ENCODE measurements at regions of chr17 and their contacts with region 1.

Region 1: GRCh38 chr17:74961657-74962490 is 10.7 kb downstream of the HID1 start:
- DNase-seq: peak; percentile 94
- ATAC-seq: peak; percentile 81
- H3K4me3 Mint-ChIP-seq: no peak overlapping the region
- H3K27ac Mint-ChIP-seq: no peak overlapping the region
- H3K4me1 Mint-ChIP-seq: peaks cover 8% of the 10 kb centered on the region
- H3K27me3 Mint-ChIP-seq: peaks cover 16% of the 10 kb centered on the region
- CTCF ChIP-seq: peak; percentile 88

Region 2: GRCh38 chr17:74864866-74865395 is 96.9 kb before region 1 on chr17:
- CTCF ChIA-PET with region 1: interaction called, 40 read pairs
- POLR2A ChIA-PET with region 1: no interaction called
- DNase-seq: peak; percentile 87
- ATAC-seq: peak; percentile 63
- H3K4me3 Mint-ChIP-seq: no peak overlapping the region
- H3K27ac Mint-ChIP-seq: peak overlapping the region; percentile 16
- H3K4me1 Mint-ChIP-seq: peaks cover 14% of the 10 kb centered on the region
- H3K27me3 Mint-ChIP-seq: peaks cover 27% of the 10 kb centered on the region
- CTCF ChIP-seq: peak; percentile 97

Region 3: GRCh38 chr17:74923533-74924249 is 38.2 kb before region 1 on chr17:
- CTCF ChIA-PET with region 1: interaction called, 206 read pairs
- POLR2A ChIA-PET with region 1: no interaction called
- DNase-seq: peak; percentile 79
- ATAC-seq: peak; percentile 18
- H3K4me3 Mint-ChIP-seq: peak overlapping the region; percentile 70
- H3K27ac Mint-ChIP-seq: no peak overlapping the region
- H3K4me1 Mint-ChIP-seq: peaks cover 13% of the 10 kb centered on the region
- H3K27me3 Mint-ChIP-seq: peaks cover 74% of the 10 kb centered on the region
- CTCF ChIP-seq: peak; percentile 91

Region 4: GRCh38 chr17:74981979-74982662 is 20.2 kb after region 1 on chr17:
- CTCF ChIA-PET with region 1: interaction called, 47 read pairs
- POLR2A ChIA-PET with region 1: interaction called, 6 read pairs
- DNase-seq: peak; percentile 86
- ATAC-seq: peak; percentile 94
- H3K4me3 Mint-ChIP-seq: peak overlapping the region; percentile 83
- H3K27ac Mint-ChIP-seq: peak overlapping the region; percentile 92
- H3K4me1 Mint-ChIP-seq: peaks cover 20% of the 10 kb centered on the region
- H3K27me3 Mint-ChIP-seq: peaks cover 33% of the 10 kb centered on the region
- CTCF ChIP-seq: no peak

Region 5: DNA sequence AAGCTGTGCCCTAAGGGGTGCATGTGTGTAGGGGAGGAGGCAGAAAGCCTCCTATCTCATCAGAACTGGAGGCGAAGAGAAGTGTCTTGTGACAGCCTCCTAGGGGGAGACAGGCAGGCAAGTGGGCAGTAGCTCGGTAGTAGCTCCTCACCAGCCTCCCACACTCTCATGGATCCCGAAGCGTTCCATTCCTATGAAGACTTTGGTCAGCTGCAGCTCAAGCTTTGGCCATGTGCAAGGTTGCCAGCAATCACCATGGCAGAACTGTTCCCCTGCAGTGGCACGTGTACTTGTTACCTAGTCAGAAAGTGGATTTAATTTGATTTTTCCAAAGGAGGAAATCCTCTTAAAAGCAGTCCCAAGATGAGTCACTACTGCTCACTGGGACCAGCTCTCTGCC is 57.3 kb after region 1 on chr17:
- CTCF ChIA-PET with region 1: interaction called, 139 read pairs
- POLR2A ChIA-PET with region 1: no interaction called
- DNase-seq: no peak
- ATAC-seq: no peak
- H3K4me3 Mint-ChIP-seq: no peak overlapping the region
- H3K27ac Mint-ChIP-seq: no peak overlapping the region
- H3K4me1 Mint-ChIP-seq: no peaks in the 10 kb centered on the region
- H3K27me3 Mint-ChIP-seq: no peaks in the 10 kb centered on the region
- CTCF ChIP-seq: no peak

Region 6: DNA sequence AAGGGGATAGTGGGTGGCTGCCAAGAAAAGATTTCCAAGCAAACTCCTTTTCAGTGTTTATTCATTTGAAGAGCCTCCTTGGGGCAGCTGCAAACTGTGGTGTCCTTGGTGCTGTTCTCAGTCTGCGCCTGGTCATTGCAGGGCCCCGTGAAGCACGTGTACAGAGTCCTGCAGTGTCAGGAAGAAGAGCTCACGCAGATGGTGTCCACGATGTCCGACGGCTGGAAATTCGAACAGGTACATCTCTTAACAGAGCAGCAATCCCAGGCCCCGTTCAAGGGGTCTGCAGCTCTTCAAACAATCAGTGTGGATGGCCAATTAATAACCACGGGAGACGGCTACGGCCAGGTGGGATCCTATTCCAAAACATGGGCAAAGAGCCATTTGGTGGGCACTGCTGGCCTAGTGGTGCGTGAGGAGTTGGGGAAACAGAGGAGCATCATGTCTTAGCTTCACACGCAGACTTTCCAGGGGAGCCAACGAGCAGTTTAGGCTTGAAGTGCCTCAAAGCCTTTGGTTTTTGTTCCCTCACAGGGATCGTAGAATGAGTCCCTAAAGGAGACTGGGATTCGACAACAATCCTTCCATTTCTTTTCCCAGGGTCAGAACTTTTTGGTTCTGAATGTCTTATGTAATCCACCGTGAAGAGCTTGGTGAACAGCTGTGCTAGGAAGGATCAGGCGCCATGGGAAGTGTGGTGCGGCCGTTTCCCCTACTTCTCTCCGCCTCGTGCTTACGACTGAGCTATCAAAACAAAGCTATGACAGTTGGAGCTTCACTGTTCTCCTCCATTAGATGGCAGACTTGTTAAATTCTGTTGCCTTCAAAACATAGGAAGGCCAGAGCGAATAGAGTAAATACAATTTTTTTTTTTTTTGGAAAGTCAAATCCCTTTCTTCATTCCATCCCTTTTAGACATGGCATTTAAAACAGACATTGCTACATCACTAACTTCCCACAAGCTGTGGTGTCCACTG is 97.8 kb after region 1 on chr17:
- CTCF ChIA-PET with region 1: interaction called, 18 read pairs
- POLR2A ChIA-PET with region 1: no interaction called
- DNase-seq: no peak
- ATAC-seq: peak; percentile 55
- H3K4me3 Mint-ChIP-seq: no peak overlapping the region
- H3K27ac Mint-ChIP-seq: peak overlapping the region; percentile 15; the same call in 1 of the 2 replicates
- H3K4me1 Mint-ChIP-seq: no peaks in the 10 kb centered on the region
- H3K27me3 Mint-ChIP-seq: no peaks in the 10 kb centered on the region
- CTCF ChIP-seq: no peak

Region 7: DNA sequence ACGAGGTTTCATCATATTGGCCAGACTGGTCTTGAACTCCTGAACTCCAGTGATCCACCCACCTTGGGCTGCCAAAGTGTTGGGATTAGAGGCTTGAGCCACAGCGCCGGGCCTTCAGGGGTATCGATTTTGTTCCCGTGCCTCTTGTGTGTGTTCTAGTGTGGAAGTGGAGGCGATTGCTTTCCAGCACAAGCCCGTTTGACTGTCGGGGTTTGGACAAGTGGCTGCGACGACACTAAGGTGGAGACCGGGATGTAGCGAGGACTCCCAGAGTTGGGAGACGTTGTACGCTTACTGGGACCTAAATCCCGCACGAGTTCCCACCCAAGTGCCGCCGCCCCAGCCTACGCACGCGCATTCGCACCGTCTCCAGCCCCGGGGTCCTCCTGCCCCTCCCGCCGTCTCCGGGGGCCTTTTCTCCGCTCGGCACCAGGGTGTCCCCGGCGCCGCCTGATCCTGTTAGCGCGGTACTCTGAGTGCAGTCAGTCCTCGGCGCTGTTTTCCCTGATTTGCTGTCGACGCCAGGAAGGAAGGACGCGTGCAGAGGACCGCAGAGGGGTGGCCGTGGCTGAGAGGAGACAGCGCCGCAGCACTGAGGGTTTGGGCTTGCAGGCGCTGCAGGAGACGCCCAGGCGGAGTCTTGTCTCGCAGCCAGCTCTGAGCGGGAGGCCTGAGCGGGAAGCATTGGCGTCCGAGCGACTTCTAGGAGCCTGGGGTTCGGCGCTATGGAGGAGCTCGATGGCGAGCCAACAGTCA is 243.3 kb after region 1 on chr17 and contains the start of gene NUP85:
- CTCF ChIA-PET with region 1: interaction called, 16 read pairs
- POLR2A ChIA-PET with region 1: no interaction called
- DNase-seq: peak; percentile 95
- ATAC-seq: peak; percentile 89
- H3K4me3 Mint-ChIP-seq: peak within 1 kb of the TSS; percentile 92
- H3K27ac Mint-ChIP-seq: peak within 1 kb of the TSS; percentile 100
- H3K4me1 Mint-ChIP-seq: peaks cover 14% of the 10 kb centered on the region
- H3K27me3 Mint-ChIP-seq: no peaks in the 10 kb centered on the region
- CTCF ChIP-seq: no peak
- total RNA-seq, gene NUP85: 89.7 to 109 TPM (median 95.1 TPM) in 3 replicates

Measured in WTC11 (cell line).